CD8-positive, alpha-beta T cell (primary cell): ENCODE measurements at regions of chr7 and their contacts with region 1.

Region 1: GRCh38 chr7:76225379-76225778 is 23.7 kb downstream of the SRRM3 start:
- DNase-seq: peak in 6 of 9 experiments; percentile 4 to 48 (median 36)
- ATAC-seq: peak; percentile 49
- H3K4me3 ChIP-seq: no peak overlapping the region
- H3K4me3 Mint-ChIP-seq: no peak overlapping the region
- H3K27ac ChIP-seq: no peak overlapping the region
- H3K27ac Mint-ChIP-seq: no peak overlapping the region
- H3K4me1 ChIP-seq: no peaks in the 10 kb centered on the region
- H3K4me1 Mint-ChIP-seq: no peaks in the 10 kb centered on the region
- H3K27me3 ChIP-seq: peaks cover 3 to 4% of the 10 kb centered on the region in 2 experiments
- H3K27me3 Mint-ChIP-seq: peaks cover 46% of the 10 kb centered on the region
- CTCF ChIP-seq: no peak

Region 2: DNA sequence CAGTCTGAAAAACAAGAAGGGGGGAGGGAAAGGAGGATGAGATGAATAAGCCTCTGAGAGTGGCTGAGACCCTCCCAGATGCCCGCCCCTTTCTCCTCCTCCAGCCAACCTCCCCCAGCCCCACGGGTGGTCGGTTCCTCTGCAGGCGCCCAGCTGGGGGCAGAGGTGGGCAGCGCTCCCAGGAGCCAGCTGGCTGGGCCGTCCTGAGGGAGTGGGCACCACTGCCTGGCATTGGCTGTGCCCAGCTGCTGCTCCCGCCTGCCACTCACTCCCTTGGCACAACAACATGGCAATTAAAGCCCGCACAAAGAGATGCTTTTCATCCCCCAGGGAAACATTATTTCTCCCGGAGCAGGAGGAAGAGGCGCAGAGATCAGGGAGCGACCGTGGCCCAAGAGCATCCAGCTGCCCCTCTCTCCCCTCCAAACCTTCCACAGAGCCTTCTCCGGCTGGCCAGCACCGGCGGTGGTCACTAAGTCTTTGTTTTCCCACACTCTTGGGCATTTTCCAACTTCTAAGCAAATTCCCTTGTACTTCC is 626.1 kb before region 1 on chr7:
- CTCF ChIA-PET with region 1: no interaction called
- POLR2A ChIA-PET with region 1: no interaction called
- intact Hi-C with region 1: no loop called
- DNase-seq: no peak
- ATAC-seq: no peak
- H3K4me3 ChIP-seq: no peak overlapping the region
- H3K4me3 Mint-ChIP-seq: no peak overlapping the region
- H3K27ac ChIP-seq: no peak overlapping the region
- H3K27ac Mint-ChIP-seq: no peak overlapping the region
- H3K4me1 ChIP-seq: no peaks in the 10 kb centered on the region
- H3K4me1 Mint-ChIP-seq: no peaks in the 10 kb centered on the region
- H3K27me3 ChIP-seq: no peaks in the 10 kb centered on the region
- H3K27me3 Mint-ChIP-seq: no peaks in the 10 kb centered on the region
- CTCF ChIP-seq: no peak

Region 3: DNA sequence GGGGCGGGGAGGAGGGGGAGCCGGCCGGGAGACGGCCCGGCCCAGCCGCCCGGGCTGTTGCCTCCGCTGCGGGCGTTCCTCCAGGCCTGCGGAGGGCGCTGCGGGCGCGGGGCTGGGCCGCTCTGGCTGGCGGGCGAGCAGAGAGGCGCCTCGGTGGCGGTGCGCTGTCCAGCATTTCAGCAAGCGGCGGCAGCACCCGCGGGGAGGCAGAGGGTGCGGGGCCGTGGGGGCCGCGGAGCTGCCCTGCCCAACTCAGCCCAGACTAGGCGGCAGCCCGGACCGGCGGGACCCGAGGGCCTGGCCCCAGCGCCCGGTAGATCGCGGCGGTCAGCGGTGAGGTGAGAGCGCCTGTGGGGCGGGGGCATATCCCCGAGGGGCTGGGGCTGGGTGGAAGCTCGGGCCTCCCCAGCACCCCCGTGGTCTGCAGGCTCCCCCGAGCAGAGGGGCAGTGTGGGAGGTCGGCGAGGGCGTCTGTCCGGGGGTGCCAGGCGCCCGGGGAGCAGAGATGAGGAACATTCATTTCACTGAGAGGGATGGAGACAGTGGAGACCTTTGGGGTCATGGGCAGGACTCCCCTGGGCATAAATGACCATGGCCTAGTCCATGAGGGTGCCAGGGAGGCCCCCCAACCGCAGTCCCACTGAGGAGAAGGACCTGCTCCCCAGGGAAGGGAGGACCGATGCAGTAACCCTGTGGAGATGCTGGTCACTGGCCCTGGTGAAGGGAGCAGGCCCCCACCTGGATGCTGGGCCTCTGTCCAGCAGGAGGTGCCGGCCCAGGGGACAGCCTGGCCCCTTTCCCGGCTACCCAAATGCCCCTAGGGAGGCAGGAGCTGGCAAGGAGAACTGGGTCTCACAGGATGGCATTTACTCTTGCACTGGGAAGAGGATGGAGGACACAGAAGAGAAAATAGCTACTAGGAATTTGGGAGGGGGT is 23.4 kb before region 1 on chr7 and contains the start of gene SRRM3:
- CTCF ChIA-PET with region 1: interaction called, 3 read pairs
- POLR2A ChIA-PET with region 1: no interaction called
- intact Hi-C with region 1: loop called in 1 of 2 experiments (anchors 1 kb)
- DNase-seq: peak; percentile 74 to 89 (median 81)
- ATAC-seq: peak; percentile 99
- H3K4me3 ChIP-seq: no peak within 1 kb of the TSS
- H3K4me3 Mint-ChIP-seq: no peak within 1 kb of the TSS
- H3K27ac ChIP-seq: no peak within 1 kb of the TSS
- H3K27ac Mint-ChIP-seq: no peak within 1 kb of the TSS
- H3K4me1 ChIP-seq: no peaks in the 10 kb centered on the region
- H3K4me1 Mint-ChIP-seq: no peaks in the 10 kb centered on the region
- H3K27me3 ChIP-seq: peaks cover 7 to 10% of the 10 kb centered on the region in 2 experiments
- H3K27me3 Mint-ChIP-seq: peaks cover 40% of the 10 kb centered on the region
- CTCF ChIP-seq: peak; percentile 56
- total RNA-seq, gene SRRM3: not detected